A673 (cell line): ENCODE measurements at regions of chr3 and their contacts with region 1.

Region 1: DNA sequence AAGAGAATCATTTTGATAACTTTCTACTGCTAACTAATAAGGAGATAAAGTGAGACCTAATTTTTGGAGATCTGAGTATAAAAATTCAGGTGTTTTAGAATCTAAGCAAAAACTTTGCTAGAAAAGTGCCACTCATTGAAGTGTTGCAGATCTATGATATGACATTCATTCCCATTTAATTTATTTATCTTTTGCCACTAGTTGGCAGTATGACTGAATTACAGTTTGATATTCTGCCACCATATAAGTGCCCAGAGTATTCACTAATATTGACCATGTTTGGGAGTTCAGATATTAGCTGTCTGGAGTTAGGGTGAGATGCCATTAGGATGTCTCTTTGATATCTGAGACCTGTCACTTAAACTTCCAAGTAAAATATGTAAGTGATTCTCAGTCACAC is 251.3 kb upstream of the GBE1 start:
- DNase-seq: no peak
- H3K4me3 ChIP-seq: no peak overlapping the region
- H3K27ac ChIP-seq: no peak overlapping the region
- H3K4me1 ChIP-seq: no peaks in the 10 kb centered on the region
- H3K27me3 ChIP-seq: no peaks in the 10 kb centered on the region
- CTCF ChIP-seq: peak; percentile 34; the same call in 1 of the 2 replicates

Region 2: GRCh38 chr3:81788610-81789009 is 224.2 kb before region 1 on chr3:
- CTCF ChIA-PET with region 1: no interaction called
- POLR2A ChIA-PET with region 1: no interaction called
- intact Hi-C with region 1: no loop called
- DNase-seq: no peak
- H3K4me3 ChIP-seq: no peak overlapping the region
- H3K27ac ChIP-seq: no peak overlapping the region
- H3K4me1 ChIP-seq: no peaks in the 10 kb centered on the region
- H3K27me3 ChIP-seq: no peaks in the 10 kb centered on the region
- CTCF ChIP-seq: no peak

Region 3: DNA sequence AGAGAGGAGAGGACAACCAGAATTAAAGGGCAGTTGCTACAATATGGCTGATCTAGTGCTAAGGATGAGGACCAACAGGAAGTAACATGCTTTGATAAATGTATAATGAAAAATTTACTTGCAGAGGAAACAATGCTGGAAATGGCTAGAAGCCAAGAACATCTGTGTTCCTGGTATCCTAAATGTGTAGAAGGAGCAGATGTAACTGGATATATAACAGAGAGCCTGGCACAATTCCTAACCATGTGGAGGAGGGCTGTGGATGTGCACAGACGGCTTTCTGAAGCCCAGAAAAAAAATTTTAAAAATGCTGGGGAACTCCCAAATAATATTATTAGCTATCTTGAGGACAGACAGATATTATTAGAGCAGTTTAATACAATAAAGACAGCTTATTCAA is 92.0 kb before region 1 on chr3:
- CTCF ChIA-PET with region 1: no interaction called
- POLR2A ChIA-PET with region 1: no interaction called
- intact Hi-C with region 1: no loop called
- DNase-seq: peak; percentile 27
- H3K4me3 ChIP-seq: no peak overlapping the region
- H3K27ac ChIP-seq: no peak overlapping the region
- H3K4me1 ChIP-seq: no peaks in the 10 kb centered on the region
- H3K27me3 ChIP-seq: no peaks in the 10 kb centered on the region
- CTCF ChIP-seq: no peak

Region 4: GRCh38 chr3:81989758-81990157 is 23.0 kb before region 1 on chr3:
- CTCF ChIA-PET with region 1: no interaction called
- POLR2A ChIA-PET with region 1: no interaction called
- intact Hi-C with region 1: loop called (anchors 1 kb)
- DNase-seq: no peak
- H3K4me3 ChIP-seq: no peak overlapping the region
- H3K27ac ChIP-seq: no peak overlapping the region
- H3K4me1 ChIP-seq: no peaks in the 10 kb centered on the region
- H3K27me3 ChIP-seq: no peaks in the 10 kb centered on the region
- CTCF ChIP-seq: no peak